ENCODE measurements at regions of chr22 and their contacts with region 1.

Region 1: DNA sequence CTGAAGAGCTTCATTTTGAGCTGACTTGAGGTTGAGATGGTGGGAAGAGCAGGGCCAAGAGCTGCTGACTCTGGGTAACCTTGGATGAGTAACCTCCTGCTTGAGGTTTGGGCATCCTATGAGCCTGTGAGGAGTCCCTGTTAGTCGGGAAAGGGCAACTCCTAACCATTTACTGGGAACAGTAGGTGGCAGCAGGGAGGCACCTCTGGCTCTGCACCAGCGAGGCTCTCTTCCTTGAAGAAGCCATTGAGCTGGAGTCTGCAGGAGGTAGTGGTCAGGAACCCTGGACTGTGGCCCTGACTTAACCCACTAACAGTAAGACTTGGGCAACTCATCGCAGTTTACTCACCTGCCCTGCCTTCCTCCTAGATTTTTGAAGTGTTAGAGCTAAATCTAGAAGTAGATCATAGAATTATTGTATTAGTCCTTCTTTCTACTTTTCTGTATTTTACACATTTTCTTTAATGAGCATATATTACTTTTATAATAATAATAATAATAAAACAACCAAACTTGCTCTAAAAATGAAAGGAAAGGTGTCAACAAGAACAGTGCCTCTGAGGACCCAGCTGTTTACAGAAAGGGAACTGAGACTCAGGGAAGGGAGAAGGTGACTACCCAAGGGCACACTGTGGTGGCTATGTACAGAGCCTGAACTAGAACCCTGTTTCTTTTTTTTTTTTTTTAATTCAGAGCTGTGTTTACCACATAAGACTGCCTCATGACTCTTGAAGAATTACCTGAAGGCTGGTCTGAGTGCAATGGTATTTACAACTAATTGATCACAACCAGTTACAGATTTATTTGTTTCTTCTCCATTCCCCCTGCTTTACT is 47.5 kb downstream of the MEI1 start:
- DNase-seq: peak; percentile 42
- H3K4me3 Mint-ChIP-seq: no peak overlapping the region
- H3K27ac Mint-ChIP-seq: no peak overlapping the region
- H3K4me1 Mint-ChIP-seq: peaks cover 8% of the 10 kb centered on the region
- H3K27me3 Mint-ChIP-seq: peaks cover 41% of the 10 kb centered on the region

Region 2: DNA sequence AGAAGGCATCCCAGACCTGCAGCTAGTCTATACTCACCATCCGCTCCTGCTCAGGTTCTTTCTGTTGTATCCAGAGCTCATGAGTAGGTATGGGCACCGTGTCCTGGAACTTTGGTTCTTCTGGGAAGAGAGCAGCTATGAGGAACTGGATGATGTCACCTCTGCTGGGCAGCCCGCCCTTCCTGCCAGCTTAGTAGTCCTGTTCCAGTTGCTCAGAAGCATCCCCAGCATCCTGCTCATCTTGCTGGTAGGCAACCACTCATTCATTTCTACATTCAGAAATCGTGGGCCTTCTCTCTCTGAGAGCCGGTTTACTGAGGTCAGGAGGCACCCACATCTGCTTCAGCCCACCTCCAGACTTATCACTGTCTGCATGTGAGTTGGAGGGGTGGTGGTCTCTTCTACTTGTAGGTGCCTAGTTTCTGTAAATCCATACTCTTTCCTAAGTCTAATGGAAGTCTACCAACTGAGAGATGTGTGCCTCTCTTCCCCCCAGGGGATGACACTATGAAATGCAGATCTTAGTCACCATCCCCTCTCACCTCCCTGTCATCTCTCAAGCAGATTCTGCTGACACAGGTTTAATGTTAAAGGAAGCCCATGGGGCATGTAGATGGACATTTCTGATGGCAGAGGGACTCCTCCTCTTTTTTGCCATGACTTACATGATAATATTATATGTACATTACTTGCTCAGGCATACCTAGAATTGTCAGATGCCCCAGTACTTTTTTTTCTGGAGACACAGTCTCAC is 24.1 kb after region 1 on chr22:
- intact Hi-C with region 1: no loop called
- DNase-seq: no peak
- H3K4me3 Mint-ChIP-seq: no peak overlapping the region
- H3K27ac Mint-ChIP-seq: no peak overlapping the region
- H3K4me1 Mint-ChIP-seq: peaks cover 12% of the 10 kb centered on the region
- H3K27me3 Mint-ChIP-seq: peaks cover 4% of the 10 kb centered on the region

Region 3: DNA sequence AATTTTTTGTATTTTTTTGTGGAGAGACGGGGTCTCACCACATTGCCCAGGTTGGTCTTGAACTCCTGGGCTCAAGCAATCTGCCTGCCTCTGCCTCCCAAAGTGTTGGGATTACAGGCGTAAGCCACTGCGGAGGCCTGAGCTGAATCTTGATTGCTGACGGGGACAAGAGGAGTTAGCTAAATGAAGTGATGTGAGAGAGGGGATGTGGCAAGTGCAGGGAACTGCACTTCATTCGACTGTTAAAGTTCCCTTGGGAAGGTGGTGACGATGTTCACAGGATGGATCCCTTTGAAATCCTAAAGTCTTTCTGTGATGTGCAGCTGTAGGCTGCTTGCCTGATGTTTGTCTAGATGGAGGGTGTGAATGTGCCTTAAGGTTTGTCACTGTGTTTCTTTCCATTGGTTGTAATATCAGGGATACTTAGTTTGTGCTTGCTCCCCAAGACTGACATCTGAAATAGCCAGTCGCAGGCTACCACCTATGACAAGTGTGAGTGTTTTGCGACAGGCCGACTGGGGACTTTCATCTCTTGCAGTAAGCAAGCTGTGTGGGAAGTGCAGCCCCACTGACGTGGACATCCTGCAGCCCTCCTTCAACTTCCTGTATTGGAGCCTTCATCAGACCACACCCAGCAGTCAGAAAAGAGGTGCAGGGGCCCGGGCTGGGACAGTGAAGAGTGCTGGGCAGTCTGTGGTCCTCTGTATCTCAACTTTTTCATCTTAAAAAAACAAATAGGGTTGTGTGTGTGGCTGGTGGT is 34.1 kb after region 1 on chr22:
- intact Hi-C with region 1: loop called (anchors 1 kb)
- DNase-seq: peak; percentile 90
- H3K4me3 Mint-ChIP-seq: peak overlapping the region; percentile 83
- H3K27ac Mint-ChIP-seq: peak overlapping the region; percentile 91
- H3K4me1 Mint-ChIP-seq: peaks cover 41% of the 10 kb centered on the region
- H3K27me3 Mint-ChIP-seq: peaks cover 2% of the 10 kb centered on the region

Measured in activated T-helper 1 cell treated with anti-CD3 and anti-CD28 coated beads, Interleukin-12 subunit alpha, Interleukin-12 subunit beta, Interleukin-2, Interleukin-4 antibody, amounts not matched to agents 30 ng/mL and 10 ng/mL and 1 ng/mL, durations not matched to agents 14 hours and 24 hours and 36 hours (primary cell).